Activated CD4-positive, alpha-beta memory T cell treated with anti-CD3 and anti-CD28 coated beads for 36 hours (primary cell): ENCODE measurements at regions of chr13 and their contacts with region 1.

Region 1: DNA sequence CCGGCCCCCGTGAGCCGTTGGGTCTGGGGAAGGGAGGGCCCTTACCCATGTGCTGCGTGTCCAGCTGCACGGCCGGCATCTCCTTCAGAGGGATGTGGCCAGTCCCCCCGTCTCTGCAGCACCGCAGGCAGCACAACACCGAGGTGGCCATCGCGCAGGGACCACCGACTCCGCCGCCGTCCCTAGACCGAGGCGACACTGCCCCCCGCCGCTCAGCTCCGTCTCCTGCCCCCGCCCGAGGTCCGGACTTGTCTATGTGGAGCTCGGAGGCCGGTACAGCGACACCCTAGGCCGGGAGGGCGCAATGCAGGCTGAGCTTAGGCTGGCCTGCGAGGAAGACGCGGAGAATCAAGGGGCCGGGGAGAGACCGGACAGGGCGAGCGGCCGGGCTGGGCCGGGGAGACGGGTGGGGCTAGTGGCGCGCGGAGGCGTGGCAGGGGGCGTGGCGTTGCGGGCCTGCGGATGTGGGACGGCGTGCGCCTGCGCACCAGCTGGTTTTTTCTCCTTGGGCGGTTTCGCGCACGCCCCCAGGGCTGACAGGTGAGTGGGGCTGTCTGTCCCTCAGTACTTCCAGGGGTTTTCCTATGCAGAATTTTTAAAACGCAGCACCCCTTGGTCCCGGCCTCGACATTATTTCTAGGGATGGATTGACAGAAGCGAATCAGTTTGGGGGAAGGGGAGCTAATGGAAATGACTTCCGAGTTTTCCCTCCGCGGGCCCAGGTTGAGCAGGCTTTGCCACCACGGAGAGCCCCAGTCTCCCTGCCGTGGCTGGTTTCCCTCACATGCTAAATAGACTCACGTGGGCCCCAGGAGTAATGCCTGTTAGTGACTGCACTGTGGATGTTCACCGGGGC is at the start of gene SPRYD7:
- DNase-seq: peak; percentile 97
- H3K4me3 Mint-ChIP-seq: peak within 1 kb of the TSS; percentile 92
- H3K27ac Mint-ChIP-seq: peak within 1 kb of the TSS; percentile 77
- H3K4me1 Mint-ChIP-seq: peaks cover 12% of the 10 kb centered on the region
- H3K27me3 Mint-ChIP-seq: no peaks in the 10 kb centered on the region
- total RNA-seq, gene SPRYD7: 4.9 to 5.4 TPM

Region 2: GRCh38 chr13:49690992-49691886 is 245.1 kb before region 1 on chr13 and contains the start of gene EBPL:
- CTCF ChIA-PET with region 1: interaction called, 5 read pairs
- POLR2A ChIA-PET with region 1: no interaction called
- intact Hi-C with region 1: loop called (anchors 5 kb)
- DNase-seq: peak; percentile 94
- H3K4me3 Mint-ChIP-seq: peak within 1 kb of the TSS; percentile 83
- H3K27ac Mint-ChIP-seq: peak within 1 kb of the TSS; percentile 62
- H3K4me1 Mint-ChIP-seq: peaks cover 15% of the 10 kb centered on the region
- H3K27me3 Mint-ChIP-seq: no peaks in the 10 kb centered on the region
- total RNA-seq, gene EBPL: 36.1 to 36.2 TPM

Region 3: DNA sequence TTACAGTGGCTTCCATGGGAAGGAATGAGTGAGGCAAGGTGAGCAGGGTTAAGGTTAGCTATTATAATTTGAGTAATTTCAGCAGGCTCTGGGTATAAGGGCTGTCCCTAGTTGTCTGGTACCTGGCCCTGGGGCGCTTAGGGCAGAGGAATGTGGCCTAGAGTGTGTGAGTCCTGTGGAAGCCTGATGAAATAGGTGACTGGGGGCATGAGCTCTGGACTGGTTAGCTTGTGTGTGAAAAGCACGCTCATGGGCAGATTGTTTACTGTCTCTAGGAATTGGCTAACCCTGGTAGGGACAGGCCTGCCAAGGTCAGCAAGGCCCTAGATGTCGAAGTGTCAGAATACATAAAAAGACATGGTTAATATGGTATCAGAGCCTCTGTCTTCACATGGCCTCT is 42.7 kb before region 1 on chr13:
- CTCF ChIA-PET with region 1: no interaction called
- POLR2A ChIA-PET with region 1: no interaction called
- intact Hi-C with region 1: no loop called
- DNase-seq: no peak
- H3K4me3 Mint-ChIP-seq: no peak overlapping the region
- H3K27ac Mint-ChIP-seq: no peak overlapping the region
- H3K4me1 Mint-ChIP-seq: no peaks in the 10 kb centered on the region
- H3K27me3 Mint-ChIP-seq: peaks cover 3% of the 10 kb centered on the region